ENCODE measurements at regions of chr3 and their contacts with region 1.

Region 1: GRCh38 chr3:183180105-183180783 is 17.7 kb upstream of the LAMP3 start:
- DNase-seq: peak in 1 of 10 donors; percentile 17
- H3K4me3 ChIP-seq: peak overlapping the region in 57 of 59 donors; percentile 15 to 83 (median 70)
- H3K27ac ChIP-seq: peak overlapping the region in 12 of 59 donors; percentile 4 to 86 (median 52)
- H3K27me3 ChIP-seq: no peaks in the 10 kb centered on the region
- CTCF ChIP-seq: no peak

Region 2: GRCh38 chr3:182829761-182830405 is 350.4 kb before region 1 on chr3:
- intact Hi-C with region 1: no loop called
- DNase-seq: no peak
- H3K4me3 ChIP-seq: no peak overlapping the region
- H3K27ac ChIP-seq: no peak overlapping the region
- H3K27me3 ChIP-seq: no peaks in the 10 kb centered on the region
- CTCF ChIP-seq: no peak

Region 3: DNA sequence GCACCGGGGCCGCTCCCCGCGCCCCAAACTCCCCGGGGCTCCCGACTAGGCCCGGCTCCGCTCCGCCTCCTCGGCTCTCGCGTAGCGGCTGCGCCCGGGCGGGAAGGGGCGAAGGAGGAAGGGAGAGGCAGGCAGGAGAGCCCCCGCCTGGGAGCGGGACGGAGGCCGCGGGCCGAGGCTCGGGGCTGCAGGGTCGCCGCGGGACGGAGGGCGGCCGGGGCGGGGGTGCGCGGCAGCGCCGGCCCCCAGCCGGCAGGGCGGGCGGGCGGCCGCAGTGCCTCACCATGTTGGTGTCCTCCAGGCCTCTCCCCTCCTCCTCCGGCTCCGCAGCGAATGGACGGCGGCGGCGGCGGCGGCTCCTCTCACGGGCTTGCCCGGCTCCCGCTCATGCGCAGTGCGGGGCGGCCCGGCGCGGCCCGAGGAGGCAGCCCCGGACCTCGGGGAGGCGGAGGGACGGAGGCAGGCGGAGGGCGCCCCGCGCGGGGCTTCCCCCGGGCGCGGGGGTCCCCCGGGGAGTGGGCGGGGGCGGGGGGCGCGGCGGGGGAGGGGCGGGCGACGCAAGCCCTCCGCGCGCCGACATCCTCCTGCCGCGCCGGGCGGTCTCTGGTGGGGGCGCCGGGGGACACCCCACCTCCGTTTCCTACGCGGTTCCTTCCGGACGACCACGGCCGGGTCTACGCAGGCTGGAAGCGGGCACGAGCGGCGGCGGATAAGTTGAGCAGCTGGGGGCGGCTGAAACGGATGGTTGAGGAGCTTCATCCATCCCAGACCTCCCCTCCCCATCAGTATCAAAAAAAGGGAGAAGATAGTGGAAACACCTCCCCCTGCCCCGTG is 199.8 kb before region 1 on chr3 and contains the start of gene DCUN1D1:
- intact Hi-C with region 1: no loop called
- DNase-seq: peak; percentile 75 to 93 (median 86)
- H3K4me3 ChIP-seq: peak within 1 kb of the TSS; percentile 65 to 97 (median 91)
- H3K27ac ChIP-seq: peak within 1 kb of the TSS; percentile 75 to 97 (median 92)
- H3K27me3 ChIP-seq: no peaks in the 10 kb centered on the region
- CTCF ChIP-seq: peak in 5 of 56 donors; percentile 3 to 23 (median 7)
- total RNA-seq, gene DCUN1D1: 49.4 to 86.8 (median 66.2) TPM

Region 4: GRCh38 chr3:183122257-183122932 is 57.8 kb before region 1 on chr3:
- intact Hi-C with region 1: loop called (anchors 5 kb)
- DNase-seq: no peak
- H3K4me3 ChIP-seq: no peak overlapping the region
- H3K27ac ChIP-seq: no peak overlapping the region
- H3K27me3 ChIP-seq: no peaks in the 10 kb centered on the region
- CTCF ChIP-seq: peak; percentile 78 to 98 (median 90)

Region 5: GRCh38 chr3:183638101-183638852 is 458.0 kb after region 1 on chr3:
- intact Hi-C with region 1: no loop called
- DNase-seq: no peak
- H3K4me3 ChIP-seq: peak overlapping the region in 40 of 59 donors; percentile 9 to 100 (median 99)
- H3K27ac ChIP-seq: peak overlapping the region in 41 of 59 donors; percentile 2 to 100 (median 100)
- H3K27me3 ChIP-seq: no peaks in the 10 kb centered on the region
- CTCF ChIP-seq: no peak

Measured in dorsolateral prefrontal cortex (tissue), 120 donors.